ENCODE measurements at regions of chr2 and their contacts with region 1.

Region 1: GRCh38 chr2:32168513-32168912 is 2.8 kb downstream of the SLC30A6 start:
- DNase-seq: no peak
- H3K4me3 ChIP-seq: no peak overlapping the region
- H3K27ac ChIP-seq: no peak overlapping the region
- H3K27me3 ChIP-seq: no peaks in the 10 kb centered on the region
- CTCF ChIP-seq: no peak

Region 2: GRCh38 chr2:30172627-30173026 is 1995.9 kb before region 1 on chr2:
- CTCF ChIA-PET with region 1: interaction called, 10 read pairs
- POLR2A ChIA-PET with region 1: no interaction called
- DNase-seq: no peak
- H3K4me3 ChIP-seq: no peak overlapping the region
- H3K27ac ChIP-seq: no peak overlapping the region
- H3K27me3 ChIP-seq: no peaks in the 10 kb centered on the region
- CTCF ChIP-seq: no peak

Region 3: GRCh38 chr2:32039447-32040219 is 128.9 kb before region 1 on chr2 and contains the start of gene DPY30:
- CTCF ChIA-PET with region 1: no interaction called
- POLR2A ChIA-PET with region 1: interaction called, 22 read pairs
- DNase-seq: peak; percentile 86
- H3K4me3 ChIP-seq: peak within 1 kb of the TSS; percentile 89
- H3K27ac ChIP-seq: peak within 1 kb of the TSS; percentile 88
- H3K27me3 ChIP-seq: no peaks in the 10 kb centered on the region
- CTCF ChIP-seq: no peak
- polyA plus RNA-seq, gene DPY30: 79.1 and 104 TPM in 2 replicates

Region 4: GRCh38 chr2:32063310-32064161 is 105.0 kb before region 1 on chr2 and contains the start of gene SPAST:
- CTCF ChIA-PET with region 1: no interaction called
- POLR2A ChIA-PET with region 1: interaction called, 20 read pairs
- DNase-seq: peak; percentile 87
- H3K4me3 ChIP-seq: peak within 1 kb of the TSS; percentile 79
- H3K27ac ChIP-seq: peak within 1 kb of the TSS; percentile 78
- H3K27me3 ChIP-seq: no peaks in the 10 kb centered on the region
- CTCF ChIP-seq: peak; percentile 49
- polyA plus RNA-seq, gene SPAST: 12.6 and 17.4 TPM in 2 replicates

Region 5: GRCh38 chr2:32118055-32118454 is 50.5 kb before region 1 on chr2:
- CTCF ChIA-PET with region 1: no interaction called
- POLR2A ChIA-PET with region 1: no interaction called
- DNase-seq: no peak
- H3K4me3 ChIP-seq: no peak overlapping the region
- H3K27ac ChIP-seq: no peak overlapping the region
- H3K27me3 ChIP-seq: no peaks in the 10 kb centered on the region
- CTCF ChIP-seq: no peak